ENCODE measurements at regions of chr19 and their contacts with region 1.

Region 1: DNA sequence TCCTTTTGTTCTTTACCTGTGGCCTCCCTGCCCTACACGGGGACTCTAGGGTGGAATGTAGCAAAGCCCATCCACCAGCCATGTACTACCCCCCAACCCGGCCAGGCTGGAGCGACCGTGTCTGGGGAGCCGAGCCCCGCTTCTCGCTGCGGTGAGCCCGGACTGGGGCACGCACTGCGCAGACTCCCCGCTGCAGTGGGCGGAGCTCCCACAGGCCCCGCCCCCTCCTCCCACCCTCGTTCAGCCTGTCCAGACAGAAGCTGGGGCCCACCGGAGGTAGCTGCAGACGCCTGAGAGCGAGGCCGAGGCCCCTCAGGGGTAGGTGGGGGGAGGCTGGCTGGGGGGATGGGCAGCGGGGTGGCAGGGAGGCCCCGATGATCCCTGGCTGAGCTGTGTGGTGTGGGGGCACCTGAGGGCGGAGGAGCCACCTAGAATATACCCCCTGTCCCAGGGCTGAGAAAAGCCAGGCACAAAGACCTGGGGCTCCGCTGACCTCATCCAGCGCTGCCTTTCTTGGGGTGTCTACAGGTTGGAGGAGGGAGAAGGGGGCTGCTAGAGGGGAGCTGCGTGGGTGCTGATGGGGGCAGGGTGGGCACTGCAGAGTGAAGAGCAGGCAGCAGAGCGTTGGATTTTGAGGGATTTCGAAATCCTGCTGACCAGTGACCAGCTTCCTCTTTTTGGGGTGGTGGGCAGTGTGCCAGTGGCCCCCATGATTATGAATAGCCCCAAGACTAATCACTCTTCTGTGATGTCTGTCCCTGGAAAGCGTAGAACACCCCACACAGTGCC is 17.3 kb downstream of the PLD3 start:
- DNase-seq: peak; percentile 71
- ATAC-seq: peak; percentile 97
- H3K4me3 ChIP-seq: peak overlapping the region; percentile 72
- H3K27ac ChIP-seq: peak overlapping the region; percentile 85
- H3K4me1 ChIP-seq: peaks cover 10% of the 10 kb centered on the region
- H3K27me3 ChIP-seq: no peaks in the 10 kb centered on the region
- CTCF ChIP-seq: no peak
- POLR2A ChIP-seq: no peak
- RAD21 ChIP-seq: no peak

Region 2: DNA sequence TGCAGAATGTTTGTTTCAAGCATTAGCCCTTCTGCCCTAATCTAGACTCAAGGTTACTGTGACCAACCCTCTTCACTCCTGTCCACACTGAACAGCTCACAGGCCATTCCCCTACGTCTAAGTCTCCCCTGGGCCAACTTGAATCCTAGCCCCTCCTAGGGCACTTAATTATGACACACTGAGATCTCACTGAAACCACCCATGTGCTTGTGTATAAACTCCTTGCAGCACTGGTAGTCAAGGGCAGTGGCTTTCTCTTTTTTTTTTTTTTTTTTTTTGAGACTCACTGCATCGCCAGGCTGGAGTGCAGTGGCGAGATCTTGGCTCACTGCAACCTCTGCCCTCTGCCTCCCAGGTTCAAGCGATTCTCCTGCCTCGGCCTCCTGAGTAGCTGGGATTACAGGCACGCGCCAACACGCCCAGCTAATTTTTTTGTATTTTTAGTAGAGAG is 78.8 kb before region 1 on chr19:
- CTCF ChIA-PET with region 1: no interaction called
- POLR2A ChIA-PET with region 1: no interaction called
- dilution Hi-C with region 1: no loop called
- in situ Hi-C with region 1: no loop called
- intact Hi-C with region 1: no loop called
- DNase-seq: no peak
- ATAC-seq: no peak
- H3K4me3 ChIP-seq: no peak overlapping the region
- H3K27ac ChIP-seq: peak overlapping the region; percentile 6; the same call in 1 of the 2 replicates
- H3K4me1 ChIP-seq: peaks cover 17% of the 10 kb centered on the region
- H3K27me3 ChIP-seq: no peaks in the 10 kb centered on the region
- CTCF ChIP-seq: no peak
- POLR2A ChIP-seq: no peak
- RAD21 ChIP-seq: no peak

Region 3: DNA sequence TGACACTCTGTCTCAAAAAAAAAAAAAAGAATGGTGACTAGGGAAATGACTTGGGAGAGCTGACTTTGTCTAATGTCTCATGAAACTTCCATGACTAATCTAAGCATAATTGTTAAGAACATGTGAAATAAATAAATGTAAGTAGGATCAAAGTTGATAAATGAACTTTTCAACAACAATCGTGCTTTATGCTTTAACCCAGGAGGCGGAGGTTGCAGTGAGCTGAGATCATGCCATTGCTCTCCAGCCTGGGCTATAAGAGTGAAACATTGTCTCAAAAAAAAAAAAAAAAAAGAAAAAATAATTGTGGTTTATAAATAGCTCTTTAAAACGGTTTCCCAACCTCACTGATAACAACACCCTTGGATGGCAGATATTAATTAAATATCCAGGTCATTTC is 67.8 kb before region 1 on chr19:
- CTCF ChIA-PET with region 1: no interaction called
- POLR2A ChIA-PET with region 1: interaction called, 16 read pairs
- dilution Hi-C with region 1: no loop called
- in situ Hi-C with region 1: no loop called
- intact Hi-C with region 1: no loop called
- DNase-seq: no peak
- ATAC-seq: no peak
- H3K4me3 ChIP-seq: no peak overlapping the region
- H3K27ac ChIP-seq: no peak overlapping the region
- H3K4me1 ChIP-seq: no peaks in the 10 kb centered on the region
- H3K27me3 ChIP-seq: no peaks in the 10 kb centered on the region
- CTCF ChIP-seq: no peak
- POLR2A ChIP-seq: no peak
- RAD21 ChIP-seq: no peak

Region 4: GRCh38 chr19:40341601-40342482 is 24.0 kb before region 1 on chr19:
- CTCF ChIA-PET with region 1: no interaction called
- POLR2A ChIA-PET with region 1: no interaction called
- dilution Hi-C with region 1: no loop called
- in situ Hi-C with region 1: no loop called
- intact Hi-C with region 1: no loop called
- DNase-seq: no peak
- ATAC-seq: peak; percentile 37
- H3K4me3 ChIP-seq: no peak overlapping the region
- H3K27ac ChIP-seq: no peak overlapping the region
- H3K4me1 ChIP-seq: no peaks in the 10 kb centered on the region
- H3K27me3 ChIP-seq: no peaks in the 10 kb centered on the region
- CTCF ChIP-seq: no peak
- POLR2A ChIP-seq: no peak
- RAD21 ChIP-seq: no peak

Region 5: DNA sequence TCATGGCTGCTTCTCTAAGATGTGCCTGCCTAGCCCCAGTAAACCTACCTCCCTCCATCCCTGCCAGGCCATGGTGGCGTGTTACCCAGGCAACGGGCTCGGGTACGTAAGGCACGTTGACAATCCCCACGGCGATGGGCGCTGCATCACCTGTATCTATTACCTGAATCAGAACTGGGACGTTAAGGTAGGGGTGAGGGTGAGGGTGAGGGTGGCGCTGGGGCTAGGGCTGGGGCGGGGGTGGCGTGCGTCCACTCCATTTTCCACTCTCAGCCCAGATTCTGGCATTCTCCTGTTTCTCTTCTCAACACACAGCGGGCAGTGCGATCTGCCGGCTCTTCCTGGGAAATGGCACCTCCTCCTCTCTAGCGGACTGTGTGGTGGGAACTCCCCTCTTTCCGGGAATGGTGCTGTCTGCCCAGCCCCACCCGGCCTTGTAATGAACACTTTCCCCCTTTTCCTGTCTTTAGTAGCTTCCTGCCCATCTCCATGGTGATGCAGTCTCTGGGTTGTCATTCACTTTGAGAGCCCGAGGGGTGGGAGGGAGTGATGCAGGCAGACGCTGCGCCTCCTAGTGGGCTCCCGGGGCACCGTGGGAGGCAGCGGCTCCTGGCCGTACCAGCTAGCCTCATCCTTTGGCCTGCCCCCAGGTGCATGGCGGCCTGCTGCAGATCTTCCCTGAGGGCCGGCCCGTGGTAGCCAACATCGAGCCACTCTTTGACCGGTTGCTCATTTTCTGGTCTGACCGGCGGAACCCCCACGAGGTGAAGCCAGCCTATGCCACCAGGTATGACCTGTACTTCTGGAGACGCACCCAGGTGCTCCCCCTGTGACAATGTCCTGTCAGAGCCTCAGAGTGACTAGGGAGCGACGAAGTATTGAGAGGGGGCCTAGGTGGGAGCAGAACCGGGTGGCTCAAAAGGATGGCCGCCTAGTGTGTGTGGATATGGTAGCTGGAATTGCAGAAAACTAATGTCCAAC is 441.0 kb after region 1 on chr19:
- CTCF ChIA-PET with region 1: no interaction called
- POLR2A ChIA-PET with region 1: no interaction called
- dilution Hi-C with region 1: no loop called
- in situ Hi-C with region 1: no loop called
- intact Hi-C with region 1: no loop called
- DNase-seq: peak; percentile 95
- ATAC-seq: peak; percentile 48
- H3K4me3 ChIP-seq: no peak overlapping the region
- H3K27ac ChIP-seq: no peak overlapping the region
- H3K4me1 ChIP-seq: peaks cover 27% of the 10 kb centered on the region
- H3K27me3 ChIP-seq: no peaks in the 10 kb centered on the region
- CTCF ChIP-seq: peak; percentile 92
- POLR2A ChIP-seq: no peak
- RAD21 ChIP-seq: peak; percentile 61